ENCODE measurements at regions of chr1 and their contacts with region 1.

Region 1: DNA sequence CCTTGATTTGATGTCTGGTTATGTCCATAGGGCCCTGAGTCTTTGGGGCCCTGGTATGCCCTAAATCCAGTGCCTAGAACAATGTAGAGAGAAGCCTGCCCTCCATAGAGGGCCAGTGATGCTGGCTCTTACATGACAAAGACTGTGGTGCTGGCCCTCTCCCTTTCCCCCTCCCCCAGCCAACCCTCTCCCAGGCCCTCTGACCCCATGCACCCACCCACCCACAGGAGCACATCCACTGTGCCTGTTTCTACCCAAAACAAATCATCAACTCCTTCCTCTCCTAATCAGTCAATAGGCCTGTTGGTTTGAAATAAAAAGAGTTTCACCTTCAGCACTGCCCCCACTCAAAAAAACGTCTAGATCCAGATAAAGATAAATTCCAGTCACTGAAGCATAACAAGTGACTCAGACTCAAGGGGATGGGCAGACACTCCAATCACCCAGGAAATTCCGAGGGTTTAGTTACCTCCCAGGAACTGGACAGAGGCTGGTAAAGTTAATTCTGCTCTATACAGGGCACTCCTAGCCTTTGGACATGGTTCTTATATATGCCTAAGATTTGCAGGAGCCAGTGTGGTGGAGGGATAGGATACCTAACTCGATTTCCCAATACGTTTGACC is 144.8 kb upstream of the VANGL1 start:
- DNase-seq: no peak
- ATAC-seq: no peak
- H3K4me3 Mint-ChIP-seq: no peak overlapping the region
- H3K27ac Mint-ChIP-seq: no peak overlapping the region
- H3K4me1 Mint-ChIP-seq: peaks cover under 1% of the 10 kb centered on the region
- H3K27me3 Mint-ChIP-seq: no peaks in the 10 kb centered on the region

Region 2: GRCh38 chr1:115409097-115410015 is 87.7 kb before region 1 on chr1:
- CTCF ChIA-PET with region 1: no interaction called
- POLR2A ChIA-PET with region 1: no interaction called
- intact Hi-C with region 1: no loop called
- DNase-seq: no peak
- ATAC-seq: no peak
- H3K4me3 Mint-ChIP-seq: no peak overlapping the region
- H3K27ac Mint-ChIP-seq: no peak overlapping the region
- H3K4me1 Mint-ChIP-seq: peaks cover 10% of the 10 kb centered on the region
- H3K27me3 Mint-ChIP-seq: peaks cover 28% of the 10 kb centered on the region

Region 3: DNA sequence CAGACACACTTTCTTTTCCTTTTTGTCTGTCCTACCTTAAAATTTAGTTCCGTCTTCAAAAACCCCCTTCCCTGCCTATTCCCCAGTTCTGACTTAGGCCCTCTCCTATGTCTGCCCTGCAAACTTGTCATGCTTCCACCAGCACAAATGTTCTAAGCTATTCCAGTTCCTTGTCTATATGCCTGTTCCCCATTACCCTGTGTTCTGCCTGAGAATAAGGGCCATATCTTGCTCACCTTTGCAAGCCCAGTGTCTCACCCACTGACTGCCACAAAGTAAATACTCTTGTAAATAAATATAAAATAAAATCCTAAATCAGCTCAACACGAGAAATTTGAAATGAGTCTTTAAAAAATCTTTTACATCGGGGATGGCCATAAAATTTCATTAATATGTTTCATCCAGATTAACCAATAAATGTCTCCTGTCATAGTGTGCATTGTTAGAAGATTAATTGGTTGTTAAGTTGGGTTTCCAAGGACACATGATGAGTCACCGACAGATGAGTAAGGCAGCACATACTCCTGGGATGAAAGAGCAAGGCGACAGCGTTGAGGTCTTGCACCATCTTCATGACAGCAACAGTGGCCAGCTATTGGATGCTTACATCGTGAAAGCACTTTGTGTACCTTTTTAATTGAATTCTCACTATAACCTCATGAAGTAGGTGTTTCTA is 66.4 kb before region 1 on chr1:
- CTCF ChIA-PET with region 1: no interaction called
- POLR2A ChIA-PET with region 1: no interaction called
- intact Hi-C with region 1: loop called in 1 of 2 experiments (anchors 10 kb)
- DNase-seq: peak; percentile 16
- ATAC-seq: no peak
- H3K4me3 Mint-ChIP-seq: no peak overlapping the region
- H3K27ac Mint-ChIP-seq: no peak overlapping the region
- H3K4me1 Mint-ChIP-seq: peaks cover 6% of the 10 kb centered on the region
- H3K27me3 Mint-ChIP-seq: peaks cover 15% of the 10 kb centered on the region

Region 4: GRCh38 chr1:115506926-115507589 is 10.0 kb after region 1 on chr1:
- CTCF ChIA-PET with region 1: no interaction called
- POLR2A ChIA-PET with region 1: no interaction called
- intact Hi-C with region 1: no loop called
- DNase-seq: no peak
- ATAC-seq: no peak
- H3K4me3 Mint-ChIP-seq: no peak overlapping the region
- H3K27ac Mint-ChIP-seq: no peak overlapping the region
- H3K4me1 Mint-ChIP-seq: peaks cover under 1% of the 10 kb centered on the region
- H3K27me3 Mint-ChIP-seq: peaks cover 8% of the 10 kb centered on the region

Measured in activated CD4-positive, alpha-beta T cell treated with anti-CD3 and anti-CD28 coated beads for 36 hours (primary cell).